ENCODE measurements at regions of chr19 and their contacts with region 1.

Region 1: GRCh38 chr19:4723367-4724187 is at the start of gene DPP9:
- DNase-seq: peak; percentile 100
- ATAC-seq: peak; percentile 94
- H3K4me3 ChIP-seq: peak within 1 kb of the TSS; percentile 71 to 97 (median 91)
- H3K4me3 Mint-ChIP-seq: peak within 1 kb of the TSS; percentile 97
- H3K27ac ChIP-seq: peak within 1 kb of the TSS; percentile 63 to 89
- H3K27ac Mint-ChIP-seq: peak within 1 kb of the TSS; percentile 98
- H3K4me1 ChIP-seq: peaks cover 20 to 26% of the 10 kb centered on the region in 2 donors
- H3K4me1 Mint-ChIP-seq: peaks cover 45% of the 10 kb centered on the region
- H3K27me3 ChIP-seq: no peaks in the 10 kb centered on the region
- H3K27me3 Mint-ChIP-seq: peaks cover 3% of the 10 kb centered on the region
- CTCF ChIP-seq: no peak
- total RNA-seq, gene DPP9: 109 and 115 TPM in 2 replicates

Region 2: GRCh38 chr19:4597975-4598671 is 125.5 kb before region 1 on chr19:
- CTCF ChIA-PET with region 1: no interaction called
- POLR2A ChIA-PET with region 1: no interaction called
- intact Hi-C with region 1: no loop called
- DNase-seq: peak; percentile 65
- ATAC-seq: peak; percentile 59
- H3K4me3 ChIP-seq: peak overlapping the region in 3 of 5 experiments; percentile 27 to 38 (median 28)
- H3K4me3 Mint-ChIP-seq: peak overlapping the region; percentile 77
- H3K27ac ChIP-seq: no peak overlapping the region
- H3K27ac Mint-ChIP-seq: no peak overlapping the region
- H3K4me1 ChIP-seq: peaks cover 15% of the 10 kb centered on the region in 2 donors
- H3K4me1 Mint-ChIP-seq: peaks cover 12% of the 10 kb centered on the region
- H3K27me3 ChIP-seq: peaks cover 0 to 35% (median 18%) of the 10 kb centered on the region in 4 experiments
- H3K27me3 Mint-ChIP-seq: peaks cover 34% of the 10 kb centered on the region
- CTCF ChIP-seq: no peak

Region 3: DNA sequence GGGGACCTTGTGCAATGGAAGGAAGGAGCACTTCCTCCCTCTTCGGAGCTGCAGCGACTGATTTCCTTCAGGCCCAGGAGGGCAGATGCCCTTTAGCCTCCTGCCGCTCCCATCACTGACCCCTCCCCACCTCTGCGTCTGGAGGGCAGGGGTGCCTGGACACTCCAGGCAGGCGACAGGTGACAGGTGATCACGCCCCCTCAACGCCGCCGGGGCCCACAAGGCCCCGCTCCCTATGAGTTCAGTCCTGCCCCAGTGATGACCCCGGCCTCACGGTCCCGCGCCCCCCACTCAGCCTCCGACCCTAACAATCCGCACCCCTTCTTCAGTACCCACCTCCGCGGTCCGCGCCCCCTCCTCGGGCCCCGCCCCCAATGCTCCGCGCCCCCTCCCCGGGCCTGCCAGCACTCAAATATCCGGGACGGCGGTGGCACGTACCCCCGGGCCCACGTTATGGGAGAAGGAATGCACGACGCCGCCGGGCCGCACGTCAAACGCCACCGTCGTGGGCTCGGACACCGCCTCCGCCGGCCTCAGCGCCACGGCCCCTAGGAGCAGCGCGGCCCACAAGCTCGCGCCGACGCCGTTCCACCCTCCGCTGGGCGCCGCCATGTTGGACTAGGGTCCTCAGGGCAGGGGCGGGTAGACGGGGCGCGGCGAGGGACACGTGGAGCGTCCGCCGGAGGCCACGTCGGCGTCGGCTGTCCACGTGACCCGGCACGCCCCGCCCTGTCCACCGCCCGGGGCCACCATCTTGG is 53.7 kb before region 1 on chr19 and contains the start of gene MYDGF:
- CTCF ChIA-PET with region 1: no interaction called
- POLR2A ChIA-PET with region 1: no interaction called
- intact Hi-C with region 1: loop called (anchors 1 kb)
- DNase-seq: peak; percentile 93
- ATAC-seq: peak; percentile 98
- H3K4me3 ChIP-seq: peak within 1 kb of the TSS; percentile 33 to 84 (median 79)
- H3K4me3 Mint-ChIP-seq: peak within 1 kb of the TSS; percentile 88
- H3K27ac ChIP-seq: peak within 1 kb of the TSS; percentile 6 to 87
- H3K27ac Mint-ChIP-seq: peak within 1 kb of the TSS; percentile 78
- H3K4me1 ChIP-seq: peaks cover 10 to 18% of the 10 kb centered on the region in 2 donors
- H3K4me1 Mint-ChIP-seq: peaks cover 20% of the 10 kb centered on the region
- H3K27me3 ChIP-seq: no peaks in the 10 kb centered on the region
- H3K27me3 Mint-ChIP-seq: no peaks in the 10 kb centered on the region
- CTCF ChIP-seq: no peak
- total RNA-seq, gene MYDGF: 18.1 and 21.2 TPM in 2 replicates

Region 4: DNA sequence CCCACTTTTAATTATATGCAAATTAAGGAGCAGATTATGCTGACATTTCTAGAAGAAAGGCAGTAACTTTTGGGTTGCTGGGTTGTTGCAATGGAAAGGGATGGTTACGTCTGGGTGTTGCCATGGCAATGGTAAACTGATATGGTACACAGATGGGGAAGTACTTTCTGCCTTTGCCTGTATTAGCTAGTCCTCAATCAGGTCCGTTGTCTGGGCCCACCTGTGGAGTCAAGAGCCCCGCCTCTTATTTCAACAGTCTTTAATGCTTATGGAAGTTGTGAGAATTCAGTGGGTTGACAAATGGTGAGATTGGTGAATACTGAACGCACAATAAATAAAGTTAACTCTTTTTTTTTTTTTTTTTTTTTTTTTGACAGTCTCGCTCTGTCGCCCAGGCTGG is 30.7 kb after region 1 on chr19:
- CTCF ChIA-PET with region 1: no interaction called
- POLR2A ChIA-PET with region 1: no interaction called
- intact Hi-C with region 1: no loop called
- DNase-seq: peak; percentile 30
- ATAC-seq: no peak
- H3K4me3 ChIP-seq: no peak overlapping the region
- H3K4me3 Mint-ChIP-seq: no peak overlapping the region
- H3K27ac ChIP-seq: no peak overlapping the region
- H3K27ac Mint-ChIP-seq: no peak overlapping the region
- H3K4me1 ChIP-seq: peaks cover 0 to under 1% of the 10 kb centered on the region in 2 donors
- H3K4me1 Mint-ChIP-seq: peaks cover 1% of the 10 kb centered on the region
- H3K27me3 ChIP-seq: peaks cover 0 to 14% (median 2%) of the 10 kb centered on the region in 4 experiments
- H3K27me3 Mint-ChIP-seq: peaks cover 36% of the 10 kb centered on the region
- CTCF ChIP-seq: no peak

Measured in B cell (primary cell).